Ascending aorta (tissue), 2 donors: ENCODE measurements at regions of chr19 and their contacts with region 1.

Region 1: GRCh38 chr19:3683405-3684053 is 16.7 kb downstream of the PIP5K1C start:
- DNase-seq: no peak
- H3K4me3 ChIP-seq: no peak overlapping the region
- H3K27ac ChIP-seq: peak overlapping the region in 1 of 2 donors; percentile 63
- H3K4me1 ChIP-seq: peaks cover 0 to 42% of the 10 kb centered on the region in 2 donors
- H3K27me3 ChIP-seq: no peaks in the 10 kb centered on the region
- CTCF ChIP-seq: no peak

Region 2: DNA sequence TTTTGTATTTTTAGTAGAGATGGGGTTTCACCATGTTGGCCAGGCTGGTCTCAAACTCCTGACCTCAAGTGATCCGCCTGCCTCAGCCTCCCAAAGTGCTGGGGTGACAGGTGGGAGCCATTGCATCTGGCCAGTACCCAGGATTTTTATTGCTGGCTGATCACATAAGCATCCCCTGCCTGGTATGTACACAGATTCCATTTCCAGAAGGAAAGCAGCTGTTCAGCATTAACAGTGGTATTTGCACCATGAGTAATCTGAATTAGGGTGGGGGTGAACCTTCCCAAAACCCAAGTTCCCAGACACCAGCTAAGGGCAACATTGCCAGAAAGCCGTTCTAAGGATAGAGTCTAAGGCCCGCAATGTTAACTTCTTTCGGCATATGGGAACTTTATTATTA is 834.9 kb before region 1 on chr19:
- intact Hi-C with region 1: no loop called
- DNase-seq: no peak
- H3K4me3 ChIP-seq: no peak overlapping the region
- H3K27ac ChIP-seq: no peak overlapping the region
- H3K4me1 ChIP-seq: no peaks in the 10 kb centered on the region
- H3K27me3 ChIP-seq: no peaks in the 10 kb centered on the region
- CTCF ChIP-seq: no peak

Region 3: DNA sequence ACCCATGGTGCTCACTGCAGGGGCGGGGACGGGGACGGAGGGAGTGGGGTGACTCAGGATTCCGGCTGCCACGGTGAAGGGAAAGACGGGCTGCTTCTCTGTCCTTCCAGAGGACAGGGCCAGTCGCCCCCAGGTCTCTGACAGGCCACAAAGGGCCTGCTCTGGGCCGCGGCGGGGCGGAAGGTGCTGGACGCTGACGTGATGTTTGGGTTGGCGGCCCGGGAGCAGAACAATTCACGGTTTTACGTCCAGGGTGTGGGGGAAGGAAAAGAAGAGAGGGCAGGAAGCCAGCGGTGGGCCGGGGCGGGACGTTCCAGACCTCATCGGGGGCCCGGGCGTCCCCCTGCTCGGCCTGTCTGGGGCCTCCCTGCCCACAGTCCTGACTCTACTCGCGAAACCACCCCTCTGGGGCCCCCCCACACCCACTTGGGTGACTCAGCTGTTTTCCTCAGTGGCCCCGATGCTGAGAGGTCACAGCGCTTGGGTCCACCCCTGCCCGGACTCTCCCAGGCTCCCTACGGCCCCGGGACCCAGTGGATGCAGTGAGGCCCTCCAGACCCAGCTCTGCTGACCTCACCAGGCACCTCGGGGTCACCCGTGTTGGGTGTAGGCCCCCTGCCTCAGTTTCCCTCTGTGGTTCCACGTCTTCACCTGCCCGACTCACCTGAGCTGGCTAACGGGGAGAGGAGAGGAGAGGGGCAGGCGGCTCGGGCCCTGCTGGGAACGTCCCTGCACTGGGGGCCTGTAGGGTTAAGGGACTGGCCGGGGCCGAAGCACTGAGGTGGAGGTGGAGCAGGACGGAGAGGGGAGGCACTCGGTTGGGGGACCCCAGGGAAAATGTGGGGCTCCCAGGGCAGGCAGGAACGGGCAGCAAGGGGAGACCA is 12.5 kb before region 1 on chr19:
- intact Hi-C with region 1: loop called (anchors 2 kb)
- DNase-seq: peak; percentile 85 to 94
- H3K4me3 ChIP-seq: peak overlapping the region; percentile 31 to 60
- H3K27ac ChIP-seq: peak overlapping the region; percentile 99
- H3K4me1 ChIP-seq: peaks cover 18 to 48% of the 10 kb centered on the region in 2 donors
- H3K27me3 ChIP-seq: no peaks in the 10 kb centered on the region
- CTCF ChIP-seq: no peak